ENCODE measurements at regions of chr14 and their contacts with region 1.

Region 1: GRCh38 chr14:20682435-20683124 is 1.8 kb upstream of the RNASE4 start:
- DNase-seq: peak; percentile 96
- H3K4me3 ChIP-seq: peak overlapping the region; percentile 77 to 93 (median 80)
- H3K27ac ChIP-seq: peak overlapping the region; percentile 99 to 100 (median 99)
- H3K4me1 ChIP-seq: peaks cover 4 to 41% (median 32%) of the 10 kb centered on the region in 4 donors
- H3K27me3 ChIP-seq: no peaks in the 10 kb centered on the region
- CTCF ChIP-seq: no peak
- EP300 ChIP-seq: no peak
- POLR2A ChIP-seq: peak; percentile 95

Region 2: DNA sequence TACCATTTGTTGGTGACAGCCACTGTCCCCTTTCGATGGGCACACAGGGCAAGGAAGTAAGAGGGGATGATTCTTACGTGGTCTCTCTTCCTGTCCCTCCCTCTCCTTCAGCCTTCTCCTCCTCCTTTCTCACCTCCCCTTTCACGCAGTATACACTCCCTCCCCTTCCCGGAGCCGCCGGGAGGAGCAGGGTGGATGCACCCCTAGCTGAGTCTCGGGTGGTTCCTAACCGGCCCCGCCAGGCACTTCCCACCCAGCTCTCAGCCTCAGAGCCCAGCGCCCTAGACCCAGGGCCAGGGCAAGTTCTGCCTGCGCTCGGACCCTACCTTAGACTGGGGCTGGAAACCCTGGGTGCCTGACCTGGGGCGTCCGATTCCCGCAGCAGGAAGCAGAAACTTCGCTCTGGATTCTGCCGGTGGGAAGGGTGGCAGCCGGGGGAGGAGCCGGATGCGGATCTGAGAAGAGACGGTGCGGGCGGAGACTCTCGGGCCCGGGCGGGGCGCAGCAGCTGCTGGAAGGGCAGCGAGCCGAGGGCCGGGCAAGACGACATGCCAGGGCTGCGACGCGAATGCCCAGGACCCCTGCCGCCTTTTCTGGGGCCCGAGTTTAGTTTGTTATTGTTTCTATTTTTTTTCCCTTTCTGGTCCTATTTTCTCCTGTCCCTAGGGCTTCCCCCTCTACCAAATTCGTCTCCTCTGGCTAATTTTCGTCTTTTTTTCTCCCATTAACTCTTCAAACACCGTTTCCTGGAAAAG is 269.4 kb before region 1 on chr14 and contains the start of gene TEP1:
- intact Hi-C with region 1: loop called (anchors 2 kb)
- DNase-seq: peak; percentile 95
- H3K4me3 ChIP-seq: peak within 1 kb of the TSS; percentile 64 to 87 (median 77)
- H3K27ac ChIP-seq: peak within 1 kb of the TSS; percentile 94 to 96 (median 96)
- H3K4me1 ChIP-seq: peaks cover 0 to 19% (median 13%) of the 10 kb centered on the region in 4 donors
- H3K27me3 ChIP-seq: no peaks in the 10 kb centered on the region
- CTCF ChIP-seq: no peak
- EP300 ChIP-seq: no peak
- POLR2A ChIP-seq: peak; percentile 50 to 64
- total RNA-seq, gene TEP1: 12.7 to 42.7 (median 19.6) TPM

Region 3: GRCh38 chr14:20632682-20633428 is 49.7 kb before region 1 on chr14:
- intact Hi-C with region 1: loop called (anchors 2 kb)
- DNase-seq: peak; percentile 75
- H3K4me3 ChIP-seq: peak overlapping the region; percentile 12 to 43 (median 28)
- H3K27ac ChIP-seq: peak overlapping the region in 3 of 4 donors; percentile 1 to 56 (median 12)
- H3K4me1 ChIP-seq: peaks cover 0 to 31% (median 29%) of the 10 kb centered on the region in 4 donors
- H3K27me3 ChIP-seq: peaks cover 0 to 5% (median 0%) of the 10 kb centered on the region in 3 donors
- CTCF ChIP-seq: no peak
- EP300 ChIP-seq: no peak
- POLR2A ChIP-seq: no peak

Region 4: DNA sequence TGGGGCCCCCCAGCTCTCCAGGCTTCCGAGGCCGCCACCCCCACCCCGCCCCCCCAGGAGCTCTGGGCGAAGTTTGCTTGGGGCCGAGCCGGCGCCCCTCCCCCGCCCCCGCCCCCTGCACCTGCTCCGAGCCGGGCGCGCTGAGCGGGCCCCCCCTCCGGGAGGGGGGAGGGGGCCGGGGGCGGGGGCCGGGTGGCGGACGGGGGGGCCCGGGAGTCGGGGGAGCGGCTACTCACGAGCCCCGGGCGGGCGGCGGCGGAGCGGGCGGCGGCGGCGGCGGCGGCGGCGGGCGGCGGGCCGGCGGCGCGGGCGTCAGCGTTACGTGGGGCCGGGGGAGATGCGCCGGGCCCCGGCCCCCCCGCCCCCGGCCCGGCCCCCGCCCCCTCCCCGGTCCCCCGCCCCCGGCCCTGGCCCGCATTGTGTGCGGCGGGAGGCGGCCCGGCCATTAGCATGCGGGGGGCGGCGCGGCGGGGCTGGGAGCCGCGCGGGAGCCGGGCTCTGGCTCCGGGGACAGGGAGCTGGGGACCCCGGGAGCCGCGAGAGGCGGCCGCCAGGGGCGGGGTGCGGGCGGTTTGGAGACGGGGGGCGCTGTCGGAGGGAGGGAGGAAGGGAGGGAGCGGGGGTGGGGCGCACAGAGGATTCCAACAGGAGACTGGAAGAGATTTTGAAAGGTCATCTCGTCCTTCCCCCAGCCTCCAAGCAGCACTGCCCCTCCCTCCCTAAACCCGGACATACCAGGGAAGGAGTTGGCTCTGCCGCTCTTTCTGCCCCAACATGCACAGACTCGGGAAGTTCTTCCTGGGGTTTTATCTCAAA is 415.7 kb after region 1 on chr14 and contains the start of gene ZNF219:
- intact Hi-C with region 1: loop called (anchors 5 kb)
- DNase-seq: peak; percentile 86
- H3K4me3 ChIP-seq: peak within 1 kb of the TSS; percentile 53 to 77 (median 72)
- H3K27ac ChIP-seq: peak within 1 kb of the TSS; percentile 92 to 98 (median 97)
- H3K4me1 ChIP-seq: peaks cover 0 to 66% (median 59%) of the 10 kb centered on the region in 4 donors
- H3K27me3 ChIP-seq: no peaks in the 10 kb centered on the region
- CTCF ChIP-seq: no peak
- EP300 ChIP-seq: no peak
- POLR2A ChIP-seq: no peak
- total RNA-seq, gene ZNF219: 38.2 to 89.7 (median 65.0) TPM